ENCODE measurements at regions of chr15 and their contacts with region 1.

Region 1: DNA sequence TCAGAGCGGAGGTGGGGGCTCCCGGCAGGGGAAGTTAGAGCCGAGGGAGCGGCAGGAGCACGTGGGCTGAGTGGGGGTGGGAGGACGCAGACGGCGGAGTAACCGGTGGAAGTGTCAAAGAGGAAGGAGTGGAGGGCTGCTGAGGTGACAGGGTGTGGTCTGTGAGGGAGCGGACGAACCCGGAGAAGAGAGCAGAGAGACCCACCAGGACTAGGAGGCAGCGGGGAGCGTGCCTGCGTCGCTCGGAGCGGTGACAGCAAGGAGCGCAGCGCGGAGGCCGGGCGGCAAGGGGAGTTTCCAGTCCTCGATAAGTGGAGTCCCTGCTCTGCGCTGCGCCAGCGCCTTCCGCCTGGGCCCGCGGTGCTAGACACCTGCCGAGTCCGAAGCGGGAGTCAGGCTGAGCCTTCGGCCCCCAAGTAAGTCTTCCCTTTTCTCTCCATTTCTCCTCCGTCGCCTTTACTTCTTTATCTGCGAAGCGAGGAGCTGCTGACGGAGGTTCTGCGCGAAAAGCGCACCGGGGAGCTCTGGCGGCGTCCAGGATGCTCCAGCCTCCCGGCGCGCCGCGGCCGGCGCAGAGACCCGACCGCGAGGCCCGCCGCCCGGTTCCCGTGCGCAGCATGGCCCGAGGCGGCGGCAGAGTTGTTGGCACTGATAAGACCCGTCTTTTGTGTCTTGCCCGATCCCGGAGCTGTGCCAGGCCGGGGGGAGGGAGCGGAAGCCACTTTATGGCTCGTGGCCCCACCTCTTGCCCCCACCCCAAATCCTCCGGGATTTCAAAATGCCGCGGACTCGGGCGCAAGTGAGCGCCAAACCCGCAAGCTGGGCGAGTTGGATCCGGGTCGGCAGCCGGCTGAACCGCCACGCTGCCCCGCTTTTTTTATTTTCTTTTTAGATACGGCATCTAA is 533.0 kb upstream of the SEMA6D start:
- DNase-seq: no peak
- H3K4me3 ChIP-seq: peak overlapping the region; percentile 28
- H3K27ac ChIP-seq: no peak overlapping the region
- H3K4me1 ChIP-seq: no peaks in the 10 kb centered on the region
- H3K27me3 ChIP-seq: peaks cover 27% of the 10 kb centered on the region
- CTCF ChIP-seq: no peak

Region 2: DNA sequence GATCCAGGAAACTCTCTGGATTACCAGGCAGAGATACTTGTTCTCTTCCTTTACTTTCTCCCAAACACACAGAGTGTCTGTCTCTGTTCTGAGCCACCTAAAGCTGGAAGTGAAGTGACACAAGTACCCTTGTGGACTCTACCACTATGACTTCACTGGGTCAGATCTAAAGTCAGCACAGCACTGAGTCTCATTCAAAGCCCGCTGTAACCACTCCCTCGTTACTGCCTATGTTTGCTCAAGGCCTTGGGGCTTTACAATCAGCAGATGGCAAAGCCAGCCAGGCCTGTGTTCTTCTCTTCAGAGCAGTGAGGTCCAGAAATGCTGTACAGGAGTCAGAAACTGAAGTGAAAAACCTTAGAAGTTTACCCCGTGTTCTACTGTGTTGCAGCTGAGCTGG is 55.2 kb before region 1 on chr15:
- intact Hi-C with region 1: loop called (anchors 10 kb)
- DNase-seq: peak; percentile 39
- H3K4me3 ChIP-seq: no peak overlapping the region
- H3K27ac ChIP-seq: no peak overlapping the region
- H3K4me1 ChIP-seq: no peaks in the 10 kb centered on the region
- H3K27me3 ChIP-seq: no peaks in the 10 kb centered on the region
- CTCF ChIP-seq: no peak

Measured in colonic mucosa (tissue), 4 donors.